Activated T-helper 1 cell treated with anti-CD3 and anti-CD28 coated beads, Interleukin-12 subunit alpha, Interleukin-12 subunit beta, Interleukin-2, Interleukin-4 antibody, amounts not matched to agents 30 ng/mL and 10 ng/mL and 1 ng/mL, durations not matched to agents 14 hours and 24 hours and 36 hours (primary cell): ENCODE measurements at regions of chr17 and their contacts with region 1.

Region 1: DNA sequence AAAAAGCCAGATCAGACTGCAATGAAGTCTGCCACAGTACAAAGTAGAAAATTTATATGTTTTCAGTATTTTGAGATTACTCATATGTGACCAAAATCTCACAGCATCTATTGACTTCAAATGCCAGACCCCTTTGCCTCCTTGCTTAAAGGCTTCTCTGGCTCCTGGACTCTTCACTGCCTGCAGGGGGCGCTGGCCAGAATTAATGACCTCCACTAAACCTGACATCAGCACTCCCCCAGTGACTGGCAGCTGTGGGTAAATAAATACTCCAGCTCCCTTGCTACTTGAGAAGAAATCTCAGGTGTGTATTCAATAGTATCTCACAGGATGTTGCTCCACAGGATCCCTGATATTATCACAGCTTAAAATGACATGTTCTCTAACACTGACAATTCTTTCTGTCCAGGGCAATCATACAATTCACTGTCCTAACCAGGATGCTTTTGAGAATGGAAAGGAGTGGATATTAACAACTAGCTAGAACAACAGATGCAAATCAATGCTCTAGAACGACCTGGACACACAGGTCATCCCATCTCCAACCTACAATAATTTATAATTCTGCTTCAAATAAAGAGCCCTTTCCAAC is 4.0 kb downstream of the BECN1 start:
- DNase-seq: peak; percentile 38
- H3K4me3 Mint-ChIP-seq: peak overlapping the region; percentile 2
- H3K27ac Mint-ChIP-seq: no peak overlapping the region
- H3K4me1 Mint-ChIP-seq: peaks cover 23% of the 10 kb centered on the region
- H3K27me3 Mint-ChIP-seq: no peaks in the 10 kb centered on the region

Region 2: GRCh38 chr17:41966463-41967140 is 853.4 kb before region 1 on chr17 and contains the start of gene CNP:
- intact Hi-C with region 1: loop called (anchors 5 kb)
- DNase-seq: peak; percentile 87
- H3K4me3 Mint-ChIP-seq: peak within 1 kb of the TSS; percentile 87
- H3K27ac Mint-ChIP-seq: peak within 1 kb of the TSS; percentile 82
- H3K4me1 Mint-ChIP-seq: peaks cover 29% of the 10 kb centered on the region
- H3K27me3 Mint-ChIP-seq: no peaks in the 10 kb centered on the region
- total RNA-seq, gene CNP: 89.1 and 89.8 TPM in 2 replicates

Region 3: GRCh38 chr17:42677008-42677857 is 142.8 kb before region 1 on chr17:
- intact Hi-C with region 1: loop called (anchors 2 kb)
- DNase-seq: peak; percentile 97
- H3K4me3 Mint-ChIP-seq: peak overlapping the region; percentile 87
- H3K27ac Mint-ChIP-seq: peak overlapping the region; percentile 83
- H3K4me1 Mint-ChIP-seq: peaks cover 50% of the 10 kb centered on the region
- H3K27me3 Mint-ChIP-seq: peaks cover 36% of the 10 kb centered on the region

Region 4: DNA sequence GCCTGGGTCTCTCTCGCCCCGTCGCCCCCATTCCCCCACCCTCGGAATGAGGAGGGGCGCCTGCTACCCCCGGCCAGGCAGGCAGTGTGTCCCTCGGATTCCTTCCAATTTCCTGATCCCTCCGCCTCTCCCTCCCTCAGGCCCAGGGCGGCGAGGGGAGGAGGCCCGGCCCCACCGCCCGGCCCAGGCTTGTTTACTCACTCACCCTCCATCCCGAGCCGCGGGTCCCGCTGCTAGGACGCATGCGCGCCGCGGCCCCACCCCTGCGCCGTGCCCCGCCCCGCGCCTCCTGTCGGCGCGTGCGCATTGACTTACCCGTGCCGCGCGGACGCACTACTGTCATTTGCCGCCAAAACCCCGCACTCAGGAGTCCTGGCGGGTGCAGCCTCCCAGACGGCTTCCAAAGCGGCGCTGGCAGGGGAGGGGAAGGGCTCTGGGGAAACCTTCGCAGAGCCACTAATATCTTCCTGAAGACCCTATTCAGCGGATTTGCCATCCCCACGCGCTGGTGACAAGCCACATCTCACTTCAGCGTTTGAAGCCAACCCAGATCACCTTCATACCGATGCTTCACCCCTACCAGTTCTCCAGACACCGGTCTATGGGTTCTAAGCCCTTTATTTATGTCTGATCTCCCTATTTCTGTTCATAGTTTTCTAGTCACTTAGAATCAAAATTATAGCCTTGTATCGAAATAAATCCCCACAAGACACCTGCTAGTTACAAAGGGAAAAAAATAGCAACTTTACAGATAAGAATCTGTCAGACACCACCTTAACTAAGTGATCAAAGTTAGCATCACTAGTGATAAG is 75.0 kb before region 1 on chr17 and contains the start of gene EZH1:
- intact Hi-C with region 1: loop called (anchors 1 kb)
- DNase-seq: peak; percentile 93
- H3K4me3 Mint-ChIP-seq: peak within 1 kb of the TSS; percentile 91
- H3K27ac Mint-ChIP-seq: peak within 1 kb of the TSS; percentile 83
- H3K4me1 Mint-ChIP-seq: peaks cover 15% of the 10 kb centered on the region
- H3K27me3 Mint-ChIP-seq: peaks cover 25% of the 10 kb centered on the region
- total RNA-seq, gene EZH1: 35.6 and 40.0 TPM in 2 replicates

Region 5: GRCh38 chr17:42798383-42799380 is 21.4 kb before region 1 on chr17 and contains the starts of genes CNTD1 and COA3:
- intact Hi-C with region 1: loop called (anchors 1 kb)
- DNase-seq: peak; percentile 73
- H3K4me3 Mint-ChIP-seq: peak within 1 kb of the TSS; percentile 90
- H3K27ac Mint-ChIP-seq: peak within 1 kb of the TSS; percentile 56
- H3K4me1 Mint-ChIP-seq: peaks cover 19% of the 10 kb centered on the region
- H3K27me3 Mint-ChIP-seq: peaks cover 3% of the 10 kb centered on the region
- total RNA-seq, gene CNTD1: not detected in 2 replicates
- total RNA-seq, gene COA3: 53.5 and 59.3 TPM in 2 replicates

Region 6: DNA sequence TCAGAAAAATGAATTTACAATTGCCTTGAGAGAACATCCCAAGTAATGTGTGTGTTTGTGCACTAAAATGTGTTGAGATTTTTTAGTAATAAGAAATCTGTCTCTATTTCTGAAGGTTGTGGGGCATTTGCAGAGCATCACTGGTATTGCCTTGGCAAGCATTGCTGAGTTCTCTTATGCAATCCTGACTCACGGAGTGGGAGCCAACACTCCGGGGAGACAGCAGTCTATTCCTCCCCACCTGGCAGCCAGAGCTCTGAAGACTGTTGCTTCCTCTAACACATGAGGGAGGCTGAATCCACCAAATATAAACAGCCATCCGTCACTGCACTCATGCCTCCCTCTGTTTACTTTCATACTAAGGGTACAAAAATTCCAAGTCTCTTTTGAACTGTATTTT is 10.8 kb before region 1 on chr17:
- intact Hi-C with region 1: no loop called
- DNase-seq: no peak
- H3K4me3 Mint-ChIP-seq: no peak overlapping the region
- H3K27ac Mint-ChIP-seq: no peak overlapping the region
- H3K4me1 Mint-ChIP-seq: no peaks in the 10 kb centered on the region
- H3K27me3 Mint-ChIP-seq: peaks cover 2% of the 10 kb centered on the region

Region 7: GRCh38 chr17:42928714-42929496 is 108.9 kb after region 1 on chr17:
- intact Hi-C with region 1: loop called (anchors 2 kb)
- DNase-seq: no peak
- H3K4me3 Mint-ChIP-seq: no peak overlapping the region
- H3K27ac Mint-ChIP-seq: peak overlapping the region; percentile 47
- H3K4me1 Mint-ChIP-seq: peaks cover 11% of the 10 kb centered on the region
- H3K27me3 Mint-ChIP-seq: peaks cover 5% of the 10 kb centered on the region

Region 8: DNA sequence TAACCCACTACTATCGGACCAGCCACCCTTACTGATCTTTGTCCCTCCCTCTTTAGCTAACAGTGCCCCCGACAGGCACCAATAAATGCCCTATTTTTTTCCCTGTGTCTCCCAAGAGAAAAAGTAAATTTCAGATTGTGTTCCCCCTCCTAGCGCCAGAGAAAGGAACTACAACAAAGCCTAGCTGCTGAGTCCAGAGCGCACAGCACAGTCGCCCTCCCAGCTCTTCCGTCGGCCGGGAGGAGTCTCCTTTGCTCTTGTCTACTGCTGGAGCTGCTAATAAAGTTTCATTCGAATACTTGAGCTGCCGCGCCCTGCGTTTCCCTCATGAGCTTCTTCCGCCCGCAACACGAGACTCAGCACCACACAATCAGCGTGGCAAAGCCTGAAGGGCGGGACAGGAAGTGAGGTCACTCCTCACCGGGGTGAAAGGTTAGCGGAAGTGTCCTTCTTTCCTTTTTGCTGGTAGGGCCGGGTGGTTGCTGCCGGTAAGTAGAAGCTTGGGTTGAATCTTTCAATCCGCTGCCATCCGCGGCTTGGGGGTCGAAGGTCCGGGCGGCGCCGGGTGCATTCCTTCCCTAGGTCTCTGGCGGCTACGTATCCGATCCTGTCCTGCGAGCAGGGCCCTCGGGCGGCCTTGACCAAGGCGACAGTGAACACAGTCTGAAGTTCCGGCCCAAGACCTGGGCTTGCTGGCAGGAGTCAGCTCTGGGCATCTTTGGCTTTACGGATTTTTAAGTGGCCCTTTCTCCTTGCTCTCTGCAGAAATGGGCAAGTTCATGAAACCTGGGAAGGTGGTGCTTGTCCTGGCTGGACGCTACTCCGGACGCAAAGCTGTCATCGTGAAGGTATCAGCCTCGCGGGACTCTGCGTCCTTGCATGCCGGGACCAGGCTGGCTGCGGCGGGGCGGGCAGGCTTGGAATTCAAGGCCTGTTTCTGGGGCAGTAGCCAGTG is 178.2 kb after region 1 on chr17 and contains the start of gene RPL27:
- intact Hi-C with region 1: loop called (anchors 1 kb)
- DNase-seq: peak; percentile 95
- H3K4me3 Mint-ChIP-seq: peak within 1 kb of the TSS; percentile 94
- H3K27ac Mint-ChIP-seq: peak within 1 kb of the TSS; percentile 96
- H3K4me1 Mint-ChIP-seq: peaks cover 23% of the 10 kb centered on the region
- H3K27me3 Mint-ChIP-seq: no peaks in the 10 kb centered on the region
- total RNA-seq, gene RPL27: 1,049 and 1,126 TPM in 2 replicates

Region 9: GRCh38 chr17:43033948-43034881 is 214.2 kb after region 1 on chr17:
- intact Hi-C with region 1: no loop called
- DNase-seq: no peak
- H3K4me3 Mint-ChIP-seq: no peak overlapping the region
- H3K27ac Mint-ChIP-seq: no peak overlapping the region
- H3K4me1 Mint-ChIP-seq: no peaks in the 10 kb centered on the region
- H3K27me3 Mint-ChIP-seq: no peaks in the 10 kb centered on the region